ENCODE measurements at regions of chr17 and their contacts with region 1.

Region 1: GRCh38 chr17:64020056-64020766 is at the start of gene ICAM2:
- DNase-seq: peak; percentile 37 to 53
- ATAC-seq: peak; percentile 70 to 74
- H3K4me3 ChIP-seq: peak within 1 kb of the TSS; percentile 46 to 61 (median 51)
- H3K27ac ChIP-seq: peak within 1 kb of the TSS; percentile 71 to 82 (median 78)
- H3K4me1 ChIP-seq: peaks cover 0 to under 1% of the 10 kb centered on the region in 2 donors
- H3K27me3 ChIP-seq: no peaks in the 10 kb centered on the region
- CTCF ChIP-seq: peak in 1 of 5 experiments; percentile 25
- POLR2A ChIP-seq: peak; percentile 45 to 71
- total RNA-seq, gene ICAM2: 39.7 to 82.4 (median 56.3) TPM

Region 2: GRCh38 chr17:63911657-63912426 is 108.4 kb before region 1 on chr17:
- in situ Hi-C with region 1: loop called in 2 of 4 experiments (anchors 5 to 10 kb)
- intact Hi-C with region 1: loop called (anchors 2 kb)
- DNase-seq: no peak
- ATAC-seq: peak; percentile 64 to 68
- H3K4me3 ChIP-seq: no peak overlapping the region
- H3K27ac ChIP-seq: no peak overlapping the region
- H3K4me1 ChIP-seq: no peaks in the 10 kb centered on the region
- H3K27me3 ChIP-seq: no peaks in the 10 kb centered on the region
- CTCF ChIP-seq: peak; percentile 41 to 94 (median 78)
- POLR2A ChIP-seq: no peak

Region 3: DNA sequence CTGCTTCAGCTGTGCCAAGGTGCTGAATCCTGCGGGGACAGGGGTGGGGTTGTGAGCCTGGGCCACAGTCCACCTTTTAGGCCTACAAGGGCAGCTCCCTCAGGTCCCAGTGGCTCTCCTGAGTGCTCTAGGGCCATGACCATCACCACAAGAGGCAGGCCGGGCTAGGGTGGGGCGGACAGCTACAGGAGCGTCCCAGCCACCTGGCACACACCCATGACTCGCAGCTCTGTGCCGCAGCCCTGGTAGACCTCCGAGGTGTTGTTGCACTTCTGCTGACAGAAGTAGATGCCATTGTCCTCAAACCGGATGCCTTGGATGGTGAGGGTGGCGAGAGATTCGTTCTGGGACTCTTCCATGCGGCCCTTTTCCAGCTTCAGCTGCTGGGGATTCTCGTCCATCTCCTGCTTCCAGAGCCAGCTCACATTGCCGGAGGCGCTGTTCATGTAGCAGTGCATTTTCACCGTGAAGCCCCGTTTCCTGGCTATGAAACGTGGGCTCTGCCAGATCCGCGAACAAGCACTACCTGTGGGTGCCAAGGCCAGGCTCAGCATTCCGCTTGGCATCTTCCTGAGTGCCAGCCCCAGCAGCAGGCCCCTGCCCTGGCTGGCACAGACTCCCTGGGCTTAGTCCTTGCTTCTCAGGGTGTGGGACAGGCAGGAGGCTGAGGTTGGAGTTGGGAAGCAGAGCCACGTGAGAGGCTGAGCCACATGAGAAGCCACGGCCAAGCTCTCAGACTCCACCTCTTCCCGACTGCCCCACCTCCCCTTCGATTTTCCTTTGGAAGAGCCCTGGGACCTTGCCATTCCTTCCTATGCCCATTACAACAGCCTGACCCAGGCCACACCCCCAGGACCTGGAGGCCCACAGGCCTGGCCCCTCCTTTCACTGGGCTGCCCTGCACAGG is 90.1 kb before region 1 on chr17:
- in situ Hi-C with region 1: loop called in 2 of 4 experiments (anchors 10 kb)
- intact Hi-C with region 1: no loop called
- DNase-seq: no peak
- ATAC-seq: peak; percentile 35 to 38
- H3K4me3 ChIP-seq: no peak overlapping the region
- H3K27ac ChIP-seq: peak overlapping the region; percentile 45 to 72 (median 66)
- H3K4me1 ChIP-seq: peaks cover 13 to 21% of the 10 kb centered on the region in 2 donors
- H3K27me3 ChIP-seq: no peaks in the 10 kb centered on the region
- CTCF ChIP-seq: no peak
- POLR2A ChIP-seq: no peak

Measured in gastrocnemius medialis (tissue), 4 donors.